ENCODE measurements at regions of chr3 and their contacts with region 1.

Region 1: DNA sequence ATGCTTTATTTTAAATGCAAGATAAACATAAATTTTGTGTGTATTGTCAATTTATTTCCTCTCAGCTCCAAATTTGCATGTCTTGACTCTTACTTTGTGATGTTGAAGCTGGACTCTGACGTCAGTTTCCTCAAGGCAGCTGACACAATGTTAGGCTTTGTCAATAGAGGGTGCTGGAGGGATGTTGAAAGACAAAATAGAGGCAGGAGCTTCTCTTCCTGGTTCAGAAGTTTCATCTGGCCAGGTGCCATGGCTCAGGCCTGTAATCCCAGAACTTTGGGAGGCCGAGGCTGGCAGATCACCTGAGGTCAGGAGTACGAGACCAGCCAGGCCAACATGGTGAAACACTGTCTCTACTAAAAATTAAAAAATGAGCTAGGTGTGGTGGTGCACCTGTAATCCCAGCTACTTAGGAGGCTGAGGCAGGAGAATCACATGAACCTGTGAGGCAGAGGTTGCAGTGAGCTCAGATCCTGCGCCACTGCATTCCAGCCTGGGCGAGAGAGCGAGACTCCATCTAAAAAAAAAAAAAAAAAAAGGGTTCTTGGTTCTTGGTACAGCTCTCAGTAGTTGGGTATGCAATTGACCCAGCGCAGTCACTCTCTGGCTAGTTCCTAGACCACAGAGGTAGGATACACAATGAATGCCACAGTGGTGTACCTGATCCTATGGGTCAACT is 408.4 kb downstream of the GBE1 start:
- DNase-seq: peak; percentile 85
- H3K4me3 ChIP-seq: no peak overlapping the region
- H3K27ac ChIP-seq: no peak overlapping the region
- H3K4me1 ChIP-seq: no peaks in the 10 kb centered on the region
- H3K27me3 ChIP-seq: no peaks in the 10 kb centered on the region
- CTCF ChIP-seq: peak; percentile 16 to 38
- POLR2A ChIP-seq: no peak

Region 2: DNA sequence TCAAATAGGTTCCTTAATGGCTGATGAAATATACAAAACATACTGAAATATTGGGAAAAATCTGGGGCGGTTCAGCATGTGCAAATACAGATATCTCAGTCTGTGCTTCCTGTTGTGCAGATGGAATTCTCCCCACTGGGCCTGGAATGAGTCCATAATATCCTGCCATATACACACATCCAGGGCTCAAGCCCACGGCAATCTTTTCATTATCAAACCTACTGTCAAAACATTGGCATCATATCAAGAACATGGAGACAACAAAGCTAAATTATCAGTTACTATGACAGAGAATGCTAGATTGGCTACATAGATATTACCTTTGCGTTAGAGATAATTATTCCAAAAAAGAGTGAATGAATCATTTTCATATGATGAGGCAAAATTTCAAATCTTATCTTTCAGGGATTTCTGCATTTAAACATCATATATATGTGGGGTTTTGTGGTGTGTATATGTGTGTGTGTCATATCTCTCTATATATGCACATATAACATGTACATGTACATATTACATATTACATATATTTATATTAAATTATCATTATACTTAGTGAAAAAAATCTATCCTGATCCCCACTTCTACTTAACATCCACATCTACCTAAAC is 304.8 kb before region 1 on chr3:
- CTCF ChIA-PET with region 1: no interaction called
- POLR2A ChIA-PET with region 1: no interaction called
- dilution Hi-C with region 1: no loop called
- intact Hi-C with region 1: no loop called
- DNase-seq: no peak
- H3K4me3 ChIP-seq: no peak overlapping the region
- H3K27ac ChIP-seq: no peak overlapping the region
- H3K4me1 ChIP-seq: no peaks in the 10 kb centered on the region
- H3K27me3 ChIP-seq: no peaks in the 10 kb centered on the region
- CTCF ChIP-seq: no peak
- POLR2A ChIP-seq: no peak

Region 3: GRCh38 chr3:81270603-81271371 is 82.2 kb before region 1 on chr3:
- CTCF ChIA-PET with region 1: no interaction called
- POLR2A ChIA-PET with region 1: no interaction called
- dilution Hi-C with region 1: no loop called
- intact Hi-C with region 1: no loop called
- DNase-seq: no peak
- H3K4me3 ChIP-seq: no peak overlapping the region
- H3K27ac ChIP-seq: no peak overlapping the region
- H3K4me1 ChIP-seq: no peaks in the 10 kb centered on the region
- H3K27me3 ChIP-seq: no peaks in the 10 kb centered on the region
- CTCF ChIP-seq: no peak
- POLR2A ChIP-seq: no peak

Region 4: DNA sequence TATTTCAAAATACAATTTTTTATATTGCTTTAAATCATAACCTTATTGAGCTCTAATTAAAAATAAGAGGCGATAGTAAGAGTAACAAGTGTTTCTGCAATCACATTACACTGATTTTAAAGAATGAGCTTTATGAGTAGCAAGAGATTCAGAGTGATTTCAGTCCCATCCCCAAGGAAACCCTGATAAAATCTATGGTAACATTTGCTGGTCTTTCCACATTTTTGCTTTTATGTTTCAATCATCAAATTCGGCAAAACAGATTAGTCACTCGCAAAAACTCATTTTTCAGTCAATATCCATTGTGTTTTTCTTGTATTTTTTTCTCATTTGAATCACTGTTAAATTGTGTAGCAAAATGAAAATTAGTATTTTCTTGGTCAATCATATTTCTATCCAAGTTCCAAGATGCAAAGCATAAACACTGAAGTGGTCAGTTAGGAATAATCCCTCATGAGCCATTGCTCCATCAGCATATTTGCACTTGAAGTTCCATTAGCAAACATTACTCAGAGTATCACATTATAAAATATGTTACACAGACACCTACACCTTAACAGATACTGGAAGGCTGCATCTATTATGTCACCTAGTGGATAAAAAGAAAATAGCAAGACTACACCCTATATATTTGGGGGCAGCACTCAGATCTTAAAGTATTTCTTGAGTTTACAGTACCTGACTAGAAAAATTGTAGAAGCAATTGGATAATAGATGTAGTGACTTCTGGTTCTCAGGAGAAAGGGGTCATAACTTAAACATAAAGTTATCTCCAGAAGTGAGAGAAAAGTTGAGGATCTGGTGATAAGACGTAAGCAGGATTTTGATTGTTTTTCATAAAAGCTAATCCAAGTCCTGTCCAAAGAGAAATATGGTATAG is 14.1 kb before region 1 on chr3:
- CTCF ChIA-PET with region 1: interaction called, 22 read pairs
- POLR2A ChIA-PET with region 1: no interaction called
- dilution Hi-C with region 1: no loop called
- intact Hi-C with region 1: no loop called
- DNase-seq: peak; percentile 48
- H3K4me3 ChIP-seq: no peak overlapping the region
- H3K27ac ChIP-seq: no peak overlapping the region
- H3K4me1 ChIP-seq: no peaks in the 10 kb centered on the region
- H3K27me3 ChIP-seq: no peaks in the 10 kb centered on the region
- CTCF ChIP-seq: peak; percentile 28 to 38
- POLR2A ChIP-seq: no peak

Region 5: DNA sequence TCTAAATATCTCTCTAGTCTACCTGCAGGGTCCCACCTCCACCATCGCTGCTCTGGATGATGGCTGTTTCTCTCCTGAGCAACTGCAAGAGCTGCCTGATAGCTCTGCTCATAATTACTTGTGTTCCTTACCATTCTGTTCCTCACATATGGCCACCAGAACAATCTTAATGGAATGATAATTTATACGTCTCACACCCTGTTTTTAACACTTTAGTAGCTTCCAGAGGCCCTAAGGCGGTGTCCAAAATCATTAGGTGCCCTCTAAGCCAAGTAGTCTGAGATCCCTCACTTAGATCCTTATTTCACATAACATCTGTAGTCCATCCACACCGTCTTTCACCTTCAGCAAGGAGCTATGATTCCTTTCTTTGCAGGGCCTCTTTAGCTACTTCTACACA is 35.2 kb after region 1 on chr3:
- CTCF ChIA-PET with region 1: interaction called, 10 read pairs
- POLR2A ChIA-PET with region 1: no interaction called
- dilution Hi-C with region 1: no loop called
- intact Hi-C with region 1: no loop called
- DNase-seq: no peak
- H3K4me3 ChIP-seq: no peak overlapping the region
- H3K27ac ChIP-seq: no peak overlapping the region
- H3K4me1 ChIP-seq: no peaks in the 10 kb centered on the region
- H3K27me3 ChIP-seq: no peaks in the 10 kb centered on the region
- CTCF ChIP-seq: no peak
- POLR2A ChIP-seq: no peak

Region 6: GRCh38 chr3:81485444-81485865 is 132.4 kb after region 1 on chr3:
- CTCF ChIA-PET with region 1: interaction called, 21 read pairs
- POLR2A ChIA-PET with region 1: no interaction called
- dilution Hi-C with region 1: no loop called
- intact Hi-C with region 1: loop called (anchors 5 kb)
- DNase-seq: peak; percentile 93
- H3K4me3 ChIP-seq: peak overlapping the region in 1 of 3 experiments; percentile 3
- H3K27ac ChIP-seq: peak overlapping the region; percentile 37
- H3K4me1 ChIP-seq: peaks cover 10% of the 10 kb centered on the region
- H3K27me3 ChIP-seq: no peaks in the 10 kb centered on the region
- CTCF ChIP-seq: no peak
- POLR2A ChIP-seq: no peak

Region 7: GRCh38 chr3:81581966-81582599 is 229.1 kb after region 1 on chr3:
- CTCF ChIA-PET with region 1: interaction called, 3 read pairs
- POLR2A ChIA-PET with region 1: no interaction called
- dilution Hi-C with region 1: no loop called
- intact Hi-C with region 1: loop called (anchors 5 kb)
- DNase-seq: peak; percentile 50
- H3K4me3 ChIP-seq: no peak overlapping the region
- H3K27ac ChIP-seq: no peak overlapping the region
- H3K4me1 ChIP-seq: no peaks in the 10 kb centered on the region
- H3K27me3 ChIP-seq: no peaks in the 10 kb centered on the region
- CTCF ChIP-seq: peak; percentile 62 to 66
- POLR2A ChIP-seq: no peak

Region 8: DNA sequence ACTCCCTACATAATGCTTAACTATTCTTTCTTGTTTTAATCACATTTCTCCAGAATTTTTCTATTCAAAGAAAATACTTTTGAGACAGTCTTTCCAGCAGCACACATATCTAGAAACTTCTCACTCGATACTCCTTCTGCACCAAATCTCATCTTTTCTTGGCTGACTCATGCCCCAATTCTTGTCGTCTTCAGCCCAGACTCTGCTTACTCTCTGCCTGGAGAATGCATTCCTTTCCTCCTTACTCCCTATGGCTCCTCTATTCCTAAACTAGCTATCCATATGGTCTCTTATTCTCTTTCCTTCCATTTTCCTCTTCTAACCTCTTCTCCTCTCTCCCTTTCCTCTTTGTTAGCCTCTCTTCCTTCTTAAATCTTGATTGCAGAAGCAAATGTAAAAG is 249.8 kb after region 1 on chr3:
- CTCF ChIA-PET with region 1: no interaction called
- POLR2A ChIA-PET with region 1: no interaction called
- dilution Hi-C with region 1: no loop called
- intact Hi-C with region 1: no loop called
- DNase-seq: no peak
- H3K4me3 ChIP-seq: no peak overlapping the region
- H3K27ac ChIP-seq: no peak overlapping the region
- H3K4me1 ChIP-seq: no peaks in the 10 kb centered on the region
- H3K27me3 ChIP-seq: no peaks in the 10 kb centered on the region
- CTCF ChIP-seq: no peak
- POLR2A ChIP-seq: no peak

Region 9: GRCh38 chr3:81760924-81761903 is 408.2 kb after region 1 on chr3 and contains the start of gene GBE1:
- CTCF ChIA-PET with region 1: no interaction called
- POLR2A ChIA-PET with region 1: no interaction called
- dilution Hi-C with region 1: no loop called
- intact Hi-C with region 1: loop called (anchors 2 kb)
- DNase-seq: peak; percentile 90
- H3K4me3 ChIP-seq: peak within 1 kb of the TSS; percentile 77 to 95 (median 83)
- H3K27ac ChIP-seq: peak within 1 kb of the TSS; percentile 96
- H3K4me1 ChIP-seq: peaks cover 24% of the 10 kb centered on the region
- H3K27me3 ChIP-seq: no peaks in the 10 kb centered on the region
- CTCF ChIP-seq: peak; percentile 32 to 37
- POLR2A ChIP-seq: peak; percentile 93
- total RNA-seq, gene GBE1: 107 and 110 TPM in 2 replicates

Region 10: DNA sequence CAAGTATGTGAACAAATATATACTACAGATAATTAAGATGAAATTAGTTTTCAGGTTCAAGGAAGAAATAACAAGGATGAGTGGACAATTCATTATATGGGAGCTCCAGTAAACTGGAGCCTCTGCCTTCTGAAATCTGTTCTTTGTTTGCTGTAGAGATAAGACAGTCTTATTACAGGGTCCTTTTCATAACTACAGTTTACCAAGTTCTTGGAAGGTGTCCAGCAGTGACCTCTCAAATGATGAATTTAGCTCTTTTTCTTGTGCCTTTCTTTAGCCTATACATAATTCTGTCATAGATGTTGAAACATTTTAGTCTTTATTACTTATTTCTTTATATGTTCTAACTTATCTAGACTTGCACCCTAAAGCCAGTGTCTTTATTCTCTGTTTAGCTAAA is 498.2 kb after region 1 on chr3:
- CTCF ChIA-PET with region 1: no interaction called
- POLR2A ChIA-PET with region 1: no interaction called
- dilution Hi-C with region 1: no loop called
- intact Hi-C with region 1: no loop called
- DNase-seq: no peak
- H3K4me3 ChIP-seq: no peak overlapping the region
- H3K27ac ChIP-seq: no peak overlapping the region
- H3K4me1 ChIP-seq: no peaks in the 10 kb centered on the region
- H3K27me3 ChIP-seq: no peaks in the 10 kb centered on the region
- CTCF ChIP-seq: no peak
- POLR2A ChIP-seq: no peak